Activated CD8-positive, alpha-beta T cell treated with anti-CD3 and anti-CD28 coated beads, Interleukin-2, amount 10 ng/mL, durations not matched to agents 7 days and 5 days (primary cell): ENCODE measurements at regions of chr7 and their contacts with region 1.

Region 1: GRCh38 chr7:112550468-112551060 is 69.8 kb downstream of the LSMEM1 start:
- DNase-seq: peak; percentile 54
- ATAC-seq: no peak
- H3K4me3 Mint-ChIP-seq: no peak overlapping the region
- H3K27ac Mint-ChIP-seq: no peak overlapping the region
- H3K4me1 Mint-ChIP-seq: no peaks in the 10 kb centered on the region
- H3K27me3 Mint-ChIP-seq: peaks cover 5% of the 10 kb centered on the region

Region 2: GRCh38 chr7:112898432-112899290 is 348.1 kb after region 1 on chr7:
- CTCF ChIA-PET with region 1: interaction called, 17 read pairs
- POLR2A ChIA-PET with region 1: no interaction called
- DNase-seq: peak; percentile 59
- ATAC-seq: peak; percentile 68
- H3K4me3 Mint-ChIP-seq: no peak overlapping the region
- H3K27ac Mint-ChIP-seq: no peak overlapping the region
- H3K4me1 Mint-ChIP-seq: no peaks in the 10 kb centered on the region
- H3K27me3 Mint-ChIP-seq: no peaks in the 10 kb centered on the region

Region 3: GRCh38 chr7:113421696-113422330 is 871.2 kb after region 1 on chr7:
- CTCF ChIA-PET with region 1: interaction called, 14 read pairs
- POLR2A ChIA-PET with region 1: no interaction called
- DNase-seq: peak; percentile 86
- ATAC-seq: peak; percentile 99
- H3K4me3 Mint-ChIP-seq: no peak overlapping the region
- H3K27ac Mint-ChIP-seq: peak overlapping the region; percentile 51
- H3K4me1 Mint-ChIP-seq: peaks cover 3% of the 10 kb centered on the region
- H3K27me3 Mint-ChIP-seq: no peaks in the 10 kb centered on the region